AG04450 (cell line): ENCODE measurements at regions of chr19 and their contacts with region 1.

Region 1: DNA sequence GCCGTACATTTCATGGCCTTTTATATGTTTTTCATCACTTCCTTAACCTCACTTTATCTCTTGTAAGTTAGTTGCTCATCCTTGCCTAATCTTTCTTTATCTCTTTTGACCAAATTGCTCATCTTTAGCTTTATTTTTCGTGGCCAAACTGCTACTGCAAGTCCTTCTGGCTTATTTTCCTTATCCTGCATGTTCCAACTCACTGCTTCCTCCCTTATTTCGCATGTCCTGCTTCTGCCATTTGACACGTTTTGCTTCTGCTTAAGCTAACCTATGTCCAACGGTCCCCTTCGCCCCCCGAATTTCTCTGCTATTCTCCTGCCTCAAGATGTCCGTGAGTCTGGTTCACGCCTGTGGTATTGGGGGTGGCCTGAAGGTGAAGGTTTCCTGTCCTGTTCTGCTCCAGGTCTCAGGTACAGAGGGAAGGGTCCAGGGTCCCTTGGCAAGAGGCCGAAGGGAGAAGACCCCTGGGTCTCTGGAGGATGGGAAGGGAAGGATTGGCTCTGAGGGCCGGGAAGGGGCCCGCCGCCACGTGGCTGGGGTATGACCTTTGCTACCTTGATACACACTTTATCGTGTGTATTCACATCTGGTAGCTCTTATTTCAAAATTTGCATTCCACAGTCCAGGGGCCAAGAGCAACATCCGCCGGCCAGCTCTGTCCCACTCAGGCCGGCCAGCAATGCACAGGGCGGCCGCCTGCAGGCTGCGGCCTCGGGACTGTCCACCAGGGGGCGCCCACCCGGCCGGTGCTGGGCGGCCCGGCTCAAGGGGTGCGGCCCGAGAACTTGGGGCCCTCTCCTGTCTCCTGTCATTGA is 2.9 kb upstream of the C19orf85 start:
- DNase-seq: no peak
- H3K4me3 ChIP-seq: no peak overlapping the region
- H3K27ac ChIP-seq: no peak overlapping the region
- H3K27me3 ChIP-seq: peaks cover 3% of the 10 kb centered on the region
- CTCF ChIP-seq: peak; percentile 90

Region 2: GRCh38 chr19:55141696-55142095 is 325.7 kb before region 1 on chr19:
- CTCF ChIA-PET with region 1: interaction called, 19 read pairs
- POLR2A ChIA-PET with region 1: no interaction called
- DNase-seq: no peak
- H3K4me3 ChIP-seq: no peak overlapping the region
- H3K27ac ChIP-seq: no peak overlapping the region
- H3K27me3 ChIP-seq: peaks cover 15% of the 10 kb centered on the region
- CTCF ChIP-seq: no peak

Region 3: DNA sequence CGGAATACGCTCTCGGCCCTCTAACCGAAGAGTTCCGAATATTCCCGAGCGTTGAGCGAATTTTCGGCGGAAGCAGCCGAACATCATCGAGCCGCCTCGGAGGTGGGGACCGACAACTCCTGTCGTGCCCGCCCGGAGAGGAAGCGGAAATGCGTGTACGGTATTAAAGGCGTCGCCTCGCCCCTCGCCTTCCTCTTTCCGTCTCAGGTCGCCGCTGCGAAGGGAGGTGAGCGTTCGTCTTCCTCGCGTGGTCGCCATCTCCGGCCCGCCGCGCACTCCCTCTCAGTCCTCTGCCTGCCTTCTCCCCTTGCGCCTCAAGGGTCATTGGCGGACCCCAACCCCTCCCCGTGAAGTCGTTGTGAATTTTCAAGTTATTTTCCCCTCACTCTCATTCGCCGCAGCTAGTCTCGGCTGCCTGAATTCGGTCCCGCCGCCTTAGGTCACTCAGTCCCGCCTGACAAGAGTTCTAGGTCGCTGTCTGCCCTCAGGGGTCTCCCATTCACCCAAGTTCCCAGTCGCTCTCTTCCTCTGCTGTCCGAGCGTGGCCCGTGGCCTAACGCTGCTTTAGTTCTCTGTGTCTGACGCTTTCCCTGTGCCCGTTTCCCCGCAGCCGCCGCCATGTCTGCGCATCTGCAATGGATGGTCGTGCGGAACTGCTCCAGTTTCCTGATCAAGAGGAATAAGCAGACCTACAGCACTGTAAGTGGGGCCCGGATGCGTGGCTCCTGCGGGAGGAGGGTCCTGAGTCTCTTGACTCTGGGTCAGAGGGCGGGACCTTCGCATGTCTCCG is 81.5 kb before region 1 on chr19 and contains the start of gene RPL28:
- CTCF ChIA-PET with region 1: no interaction called
- POLR2A ChIA-PET with region 1: no interaction called
- DNase-seq: peak; percentile 95
- H3K4me3 ChIP-seq: peak within 1 kb of the TSS; percentile 99
- H3K27ac ChIP-seq: peak within 1 kb of the TSS; percentile 93
- H3K27me3 ChIP-seq: no peaks in the 10 kb centered on the region
- CTCF ChIP-seq: no peak
- polyA plus RNA-seq, gene RPL28: 325 and 535 TPM in 2 replicates

Region 4: GRCh38 chr19:55452749-55453346 is 14.6 kb before region 1 on chr19:
- CTCF ChIA-PET with region 1: interaction called, 25 read pairs
- POLR2A ChIA-PET with region 1: no interaction called
- DNase-seq: peak; percentile 27
- H3K4me3 ChIP-seq: no peak overlapping the region; the same call in 1 of the 2 replicates
- H3K27ac ChIP-seq: no peak overlapping the region
- H3K27me3 ChIP-seq: peaks cover 28% of the 10 kb centered on the region
- CTCF ChIP-seq: no peak

Region 5: DNA sequence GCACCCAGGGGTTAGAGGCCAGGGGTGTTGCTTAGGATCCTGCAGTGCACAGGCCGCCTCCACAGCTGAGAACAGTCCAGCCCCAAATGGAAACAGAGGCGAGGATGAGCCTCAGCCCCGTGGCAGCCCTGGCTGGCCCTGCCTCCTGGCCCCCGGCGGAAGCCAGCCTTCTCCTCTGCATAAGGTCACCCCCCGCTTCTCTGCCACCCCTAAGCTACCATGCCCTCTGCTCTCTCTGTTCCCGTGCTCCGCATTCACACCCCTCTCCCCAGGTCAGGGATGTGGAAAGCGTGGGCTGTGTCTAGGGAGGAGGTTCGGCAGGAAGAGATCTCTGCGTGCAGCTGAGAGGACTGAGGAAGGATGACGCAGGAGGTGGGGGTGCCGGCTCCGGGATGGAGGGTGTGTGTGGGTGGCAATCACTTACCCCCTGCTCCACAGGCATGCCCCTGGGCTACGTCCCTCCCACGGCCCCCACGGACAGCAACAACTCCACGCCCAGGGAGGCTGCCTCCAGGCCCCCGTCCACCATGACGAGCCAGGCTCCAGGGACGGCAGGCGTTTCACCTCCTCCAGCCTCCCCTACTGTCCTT is 26.8 kb after region 1 on chr19:
- CTCF ChIA-PET with region 1: interaction called, 69 read pairs
- POLR2A ChIA-PET with region 1: interaction called, 6 read pairs
- DNase-seq: no peak
- H3K4me3 ChIP-seq: peak overlapping the region; percentile 45
- H3K27ac ChIP-seq: peak overlapping the region; percentile 73
- H3K27me3 ChIP-seq: no peaks in the 10 kb centered on the region
- CTCF ChIP-seq: no peak

Region 6: GRCh38 chr19:55593096-55593772 is 125.8 kb after region 1 on chr19:
- CTCF ChIA-PET with region 1: interaction called, 11 read pairs
- POLR2A ChIA-PET with region 1: no interaction called
- DNase-seq: no peak
- H3K4me3 ChIP-seq: no peak overlapping the region
- H3K27ac ChIP-seq: no peak overlapping the region
- H3K27me3 ChIP-seq: no peaks in the 10 kb centered on the region
- CTCF ChIP-seq: no peak

Region 7: DNA sequence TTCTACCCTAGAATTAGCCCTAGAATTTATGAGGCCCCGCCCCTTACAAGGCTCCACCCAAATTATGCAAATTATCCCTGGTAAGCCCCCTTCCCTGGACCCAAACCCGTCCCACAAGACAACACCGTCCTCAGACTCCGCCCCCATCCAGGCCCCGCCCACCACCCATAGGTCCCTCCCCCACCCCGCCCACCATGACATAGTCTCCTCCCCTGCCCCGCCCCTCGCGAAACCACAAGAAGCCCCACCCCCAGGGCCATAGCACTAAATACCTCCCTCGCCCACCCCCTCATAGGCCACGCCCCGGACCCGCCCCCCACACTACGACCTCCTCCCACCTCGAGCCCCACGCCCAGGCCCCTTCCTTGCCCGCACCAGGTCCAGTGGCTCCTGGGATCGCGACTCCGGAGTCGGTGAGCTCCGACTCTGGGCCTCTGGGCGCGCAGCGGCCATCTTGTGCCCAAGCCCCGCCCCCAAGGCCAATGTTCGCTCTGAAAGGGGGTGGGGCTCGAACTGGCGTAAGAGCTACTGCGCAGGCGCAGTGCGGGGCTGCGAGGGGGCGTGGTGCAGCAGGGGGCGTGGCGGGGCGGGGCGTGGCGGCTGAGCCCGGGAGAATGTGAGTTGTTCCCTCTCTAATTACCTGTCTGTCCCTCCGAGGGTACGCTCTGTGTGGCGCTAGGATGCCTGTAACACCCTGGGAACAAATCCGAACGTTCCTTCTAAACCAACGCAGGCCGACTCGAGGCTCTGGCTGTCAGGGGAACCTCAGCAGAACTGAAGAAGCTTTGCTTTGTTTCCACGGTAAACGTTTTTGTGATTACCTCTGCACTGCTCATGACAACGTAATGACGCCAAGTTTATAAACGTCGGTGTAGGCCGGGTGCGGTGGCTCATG is 156.9 kb after region 1 on chr19 and contains the start of gene ZNF784:
- CTCF ChIA-PET with region 1: interaction called, 16 read pairs
- POLR2A ChIA-PET with region 1: no interaction called
- DNase-seq: peak; percentile 81
- H3K4me3 ChIP-seq: peak within 1 kb of the TSS; percentile 77
- H3K27ac ChIP-seq: peak within 1 kb of the TSS; percentile 90
- H3K27me3 ChIP-seq: no peaks in the 10 kb centered on the region
- CTCF ChIP-seq: no peak
- polyA plus RNA-seq, gene ZNF784: 1.9 and 2.8 TPM in 2 replicates